Activated B cell treated with CpG ODN at 0.5 μM for 24 hours (primary cell): ENCODE measurements at regions of chr20 and their contacts with region 1.

Region 1: GRCh38 chr20:38033310-38034107 is at the starts of genes RPRD1B and TTI1:
- DNase-seq: peak; percentile 89
- ATAC-seq: peak; percentile 87
- H3K4me3 Mint-ChIP-seq: peak within 1 kb of the TSS; percentile 92
- H3K27ac Mint-ChIP-seq: peak within 1 kb of the TSS; percentile 96
- H3K4me1 Mint-ChIP-seq: peaks cover 67% of the 10 kb centered on the region
- H3K27me3 Mint-ChIP-seq: no peaks in the 10 kb centered on the region
- CTCF ChIP-seq: no peak
- total RNA-seq, gene RPRD1B: 38.4 and 40.8 TPM in 2 replicates
- total RNA-seq, gene TTI1: 27.1 and 30.1 TPM in 2 replicates

Region 2: GRCh38 chr20:37172836-37173235 is 860.7 kb before region 1 on chr20:
- CTCF ChIA-PET with region 1: no interaction called
- POLR2A ChIA-PET with region 1: interaction called, 18 read pairs
- intact Hi-C with region 1: loop called (anchors 1 kb)
- DNase-seq: no peak
- ATAC-seq: no peak
- H3K4me3 Mint-ChIP-seq: no peak overlapping the region
- H3K27ac Mint-ChIP-seq: no peak overlapping the region
- H3K4me1 Mint-ChIP-seq: peaks cover under 1% of the 10 kb centered on the region
- H3K27me3 Mint-ChIP-seq: no peaks in the 10 kb centered on the region
- CTCF ChIP-seq: no peak

Region 3: GRCh38 chr20:37475252-37475651 is 558.3 kb before region 1 on chr20:
- CTCF ChIA-PET with region 1: no interaction called
- POLR2A ChIA-PET with region 1: no interaction called
- intact Hi-C with region 1: no loop called
- DNase-seq: no peak
- ATAC-seq: no peak
- H3K4me3 Mint-ChIP-seq: no peak overlapping the region
- H3K27ac Mint-ChIP-seq: no peak overlapping the region
- H3K4me1 Mint-ChIP-seq: no peaks in the 10 kb centered on the region
- H3K27me3 Mint-ChIP-seq: peaks cover 16% of the 10 kb centered on the region
- CTCF ChIP-seq: no peak

Region 4: GRCh38 chr20:38094373-38094891 is 60.9 kb after region 1 on chr20:
- CTCF ChIA-PET with region 1: no interaction called
- POLR2A ChIA-PET with region 1: interaction called, 13 read pairs
- intact Hi-C with region 1: no loop called
- DNase-seq: no peak
- ATAC-seq: peak; percentile 70
- H3K4me3 Mint-ChIP-seq: peak overlapping the region; percentile 71
- H3K27ac Mint-ChIP-seq: peak overlapping the region; percentile 96
- H3K4me1 Mint-ChIP-seq: peaks cover 87% of the 10 kb centered on the region
- H3K27me3 Mint-ChIP-seq: no peaks in the 10 kb centered on the region
- CTCF ChIP-seq: no peak